ENCODE measurements at regions of chr5 and their contacts with region 1.

Region 1: GRCh38 chr5:64229163-64229774 is 63.6 kb downstream of the RNF180 start:
- DNase-seq: no peak
- H3K4me3 ChIP-seq: no peak overlapping the region
- H3K27ac ChIP-seq: no peak overlapping the region
- H3K4me1 ChIP-seq: peaks cover 0 to 4% of the 10 kb centered on the region in 2 donors
- H3K27me3 ChIP-seq: no peaks in the 10 kb centered on the region
- CTCF ChIP-seq: peak in 4 of 6 experiments; percentile 17 to 74 (median 66)
- POLR2A ChIP-seq: no peak

Region 2: DNA sequence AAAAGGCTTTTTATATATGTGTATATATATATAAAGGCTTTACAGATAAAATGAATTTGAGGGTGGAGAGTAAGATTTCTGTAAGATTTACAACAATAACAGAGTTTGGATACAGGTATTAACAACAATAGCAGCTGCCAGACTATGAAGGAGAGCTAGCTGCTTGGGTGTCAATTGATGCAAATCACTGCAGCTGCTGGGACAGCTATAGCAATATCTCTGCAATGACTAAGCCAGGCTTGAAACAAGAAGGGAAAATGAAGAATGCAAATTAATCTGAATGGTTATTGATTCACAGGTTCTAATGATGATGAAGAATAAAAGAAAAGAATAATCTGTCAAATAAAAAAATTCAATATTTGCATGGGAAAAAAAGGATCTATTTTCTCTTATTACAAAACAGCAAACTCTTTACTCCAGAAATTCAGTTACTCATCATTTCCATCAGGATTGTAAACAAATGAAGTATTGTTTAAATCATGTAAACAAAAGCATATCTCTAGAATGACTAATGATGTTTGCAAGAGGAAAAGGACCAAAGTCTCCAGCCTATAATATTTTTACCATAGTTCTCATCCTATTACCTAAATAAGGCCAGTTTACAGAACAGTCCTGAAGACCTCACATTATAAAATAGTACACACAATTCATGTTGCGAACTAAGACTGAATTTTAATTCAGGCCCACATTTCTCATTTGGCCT is 486.0 kb before region 1 on chr5:
- intact Hi-C with region 1: no loop called
- DNase-seq: no peak
- H3K4me3 ChIP-seq: no peak overlapping the region
- H3K27ac ChIP-seq: no peak overlapping the region
- H3K4me1 ChIP-seq: no peaks in the 10 kb centered on the region
- H3K27me3 ChIP-seq: no peaks in the 10 kb centered on the region
- CTCF ChIP-seq: no peak
- POLR2A ChIP-seq: no peak

Region 3: DNA sequence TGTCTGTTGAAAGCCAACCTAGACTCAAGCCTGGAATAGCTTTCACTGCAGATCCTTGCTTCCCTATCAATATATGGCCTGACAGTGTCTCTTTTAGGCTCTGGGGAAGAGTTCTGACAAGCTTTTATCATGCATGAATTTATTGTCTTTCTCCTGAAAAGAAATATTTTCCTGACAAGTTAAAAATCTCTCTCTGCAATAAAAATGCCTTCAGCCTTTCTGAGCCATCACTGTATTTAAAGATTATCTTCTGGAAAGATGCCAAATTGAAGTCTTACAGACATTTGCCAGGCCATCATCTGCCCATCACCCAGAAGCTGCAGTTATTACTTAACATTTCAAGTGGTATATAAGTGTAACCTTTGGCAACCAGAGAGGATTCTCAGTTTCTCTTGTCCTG is 179.0 kb before region 1 on chr5:
- intact Hi-C with region 1: no loop called
- DNase-seq: no peak
- H3K4me3 ChIP-seq: no peak overlapping the region
- H3K27ac ChIP-seq: no peak overlapping the region
- H3K4me1 ChIP-seq: no peaks in the 10 kb centered on the region
- H3K27me3 ChIP-seq: no peaks in the 10 kb centered on the region
- CTCF ChIP-seq: no peak
- POLR2A ChIP-seq: no peak

Region 4: GRCh38 chr5:64612344-64612961 is 383.2 kb after region 1 on chr5:
- intact Hi-C with region 1: loop called (anchors 10 kb)
- DNase-seq: peak; percentile 45 to 48
- H3K4me3 ChIP-seq: no peak overlapping the region
- H3K27ac ChIP-seq: no peak overlapping the region
- H3K4me1 ChIP-seq: no peaks in the 10 kb centered on the region
- H3K27me3 ChIP-seq: no peaks in the 10 kb centered on the region
- CTCF ChIP-seq: peak in 5 of 6 experiments; percentile 47 to 91 (median 79)
- POLR2A ChIP-seq: no peak

Measured in thyroid gland (tissue), 4 donors.